HEK293 (cell line): ENCODE measurements at regions of chr3 and their contacts with region 1.

Region 1: GRCh38 chr3:33787328-33788009 is 11.0 kb upstream of the PDCD6IP start:
- H3K4me3 ChIP-seq: peak overlapping the region; percentile 11; the same call in 1 of the 2 replicates
- H3K27ac ChIP-seq: no peak overlapping the region
- H3K4me1 ChIP-seq: no peaks in the 10 kb centered on the region
- CTCF ChIP-seq: peak; percentile 37; the same call in 1 of the 2 replicates

Region 2: GRCh38 chr3:33629219-33629618 is 158.2 kb before region 1 on chr3:
- CTCF ChIA-PET with region 1: interaction called, 21 read pairs
- POLR2A ChIA-PET with region 1: no interaction called
- H3K4me3 ChIP-seq: no peak overlapping the region
- H3K27ac ChIP-seq: no peak overlapping the region
- H3K4me1 ChIP-seq: no peaks in the 10 kb centered on the region
- CTCF ChIP-seq: no peak

Region 3: DNA sequence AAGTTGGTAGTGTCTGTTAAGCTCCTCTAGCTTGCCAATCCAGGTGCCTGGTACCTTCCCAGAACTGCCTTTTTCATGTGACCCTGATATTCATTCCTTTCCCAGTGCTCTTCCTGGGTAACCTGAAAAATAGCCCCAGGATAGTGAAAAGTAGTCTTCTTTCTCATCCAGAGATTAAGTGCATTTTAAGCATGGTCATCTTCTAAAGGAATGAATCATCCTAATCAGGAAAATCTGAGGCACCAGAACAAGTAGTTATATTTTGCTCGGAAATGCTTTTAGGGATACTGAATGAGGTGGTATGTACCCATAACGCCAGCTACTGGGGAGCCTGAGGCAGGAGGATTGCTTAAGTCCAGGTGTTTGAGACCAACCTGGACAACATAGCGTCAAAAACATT is 12.1 kb before region 1 on chr3:
- CTCF ChIA-PET with region 1: interaction called, 19 read pairs
- POLR2A ChIA-PET with region 1: no interaction called
- H3K4me3 ChIP-seq: no peak overlapping the region
- H3K27ac ChIP-seq: no peak overlapping the region
- H3K4me1 ChIP-seq: no peaks in the 10 kb centered on the region
- CTCF ChIP-seq: no peak